Breast epithelium (tissue), 4 donors: ENCODE measurements at regions of chr7 and their contacts with region 1.

Region 1: GRCh38 chr7:50463035-50463434 is 12.9 kb upstream of the FIGNL1 start:
- DNase-seq: no peak
- H3K4me3 ChIP-seq: no peak overlapping the region
- H3K27ac ChIP-seq: no peak overlapping the region
- H3K4me1 ChIP-seq: no peaks in the 10 kb centered on the region
- H3K27me3 ChIP-seq: no peaks in the 10 kb centered on the region
- CTCF ChIP-seq: no peak
- POLR2A ChIP-seq: no peak

Region 2: GRCh38 chr7:51263631-51264484 is 800.8 kb after region 1 on chr7:
- intact Hi-C with region 1: loop called (anchors 5 kb)
- DNase-seq: peak in 1 of 2 donors; percentile 52
- H3K4me3 ChIP-seq: no peak overlapping the region
- H3K27ac ChIP-seq: peak overlapping the region; percentile 68 to 82
- H3K4me1 ChIP-seq: peaks cover 0 to 7% of the 10 kb centered on the region in 2 donors
- H3K27me3 ChIP-seq: no peaks in the 10 kb centered on the region
- CTCF ChIP-seq: no peak
- POLR2A ChIP-seq: no peak